ENCODE measurements at regions of chr22 and their contacts with region 1.

Region 1: DNA sequence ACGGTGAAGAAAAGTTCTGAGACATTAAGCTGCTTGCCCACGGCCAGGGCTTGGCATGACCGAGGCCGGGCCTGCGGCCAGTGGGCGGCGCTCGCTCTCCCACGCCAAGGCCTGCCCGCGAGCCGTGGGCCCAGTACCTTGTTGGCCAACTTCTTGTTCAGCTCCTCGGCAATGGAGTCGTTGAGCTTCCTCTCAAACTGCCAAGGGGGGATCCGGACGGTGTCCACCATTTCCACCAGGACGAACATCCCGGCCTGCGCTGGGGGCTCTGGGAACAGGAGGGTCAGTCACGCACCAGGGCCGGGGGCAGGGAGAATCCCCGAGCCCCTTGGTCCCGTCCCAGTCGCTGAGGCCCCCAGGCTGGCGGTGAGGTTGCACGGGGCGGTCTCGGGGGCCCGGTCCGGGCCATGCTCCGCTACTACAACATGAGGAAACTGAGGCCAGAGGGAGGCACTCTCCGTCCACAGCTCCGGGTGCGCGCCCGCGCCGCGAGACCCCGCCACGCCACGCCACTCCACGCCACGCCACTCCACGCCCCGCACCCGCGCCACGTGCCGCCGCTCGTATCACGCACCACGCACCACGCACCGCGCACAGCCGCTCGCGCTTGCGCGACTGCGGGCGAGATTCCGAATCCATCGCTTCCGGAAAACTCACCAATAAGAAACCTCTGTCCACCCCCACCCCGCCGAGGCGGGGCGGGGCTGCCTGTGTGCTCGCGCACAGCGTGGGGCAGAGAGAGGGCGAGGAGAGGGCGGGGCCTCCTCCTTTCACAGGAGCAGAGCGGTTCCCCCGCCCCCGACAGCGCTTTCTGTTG is at the start of gene POLR3H:
- DNase-seq: peak; percentile 91 to 99 (median 96)
- ATAC-seq: peak; percentile 98
- H3K4me3 ChIP-seq: peak within 1 kb of the TSS; percentile 90
- H3K4me3 Mint-ChIP-seq: peak within 1 kb of the TSS; percentile 98
- H3K27ac ChIP-seq: peak within 1 kb of the TSS; percentile 77 to 81
- H3K27ac Mint-ChIP-seq: peak within 1 kb of the TSS; percentile 85
- H3K4me1 ChIP-seq: peaks cover 26% of the 10 kb centered on the region
- H3K4me1 Mint-ChIP-seq: peaks cover 41% of the 10 kb centered on the region
- H3K27me3 ChIP-seq: no peaks in the 10 kb centered on the region
- H3K27me3 Mint-ChIP-seq: no peaks in the 10 kb centered on the region
- CTCF ChIP-seq: peak; percentile 51
- total RNA-seq, gene POLR3H: 13.4 to 17.3 TPM

Region 2: DNA sequence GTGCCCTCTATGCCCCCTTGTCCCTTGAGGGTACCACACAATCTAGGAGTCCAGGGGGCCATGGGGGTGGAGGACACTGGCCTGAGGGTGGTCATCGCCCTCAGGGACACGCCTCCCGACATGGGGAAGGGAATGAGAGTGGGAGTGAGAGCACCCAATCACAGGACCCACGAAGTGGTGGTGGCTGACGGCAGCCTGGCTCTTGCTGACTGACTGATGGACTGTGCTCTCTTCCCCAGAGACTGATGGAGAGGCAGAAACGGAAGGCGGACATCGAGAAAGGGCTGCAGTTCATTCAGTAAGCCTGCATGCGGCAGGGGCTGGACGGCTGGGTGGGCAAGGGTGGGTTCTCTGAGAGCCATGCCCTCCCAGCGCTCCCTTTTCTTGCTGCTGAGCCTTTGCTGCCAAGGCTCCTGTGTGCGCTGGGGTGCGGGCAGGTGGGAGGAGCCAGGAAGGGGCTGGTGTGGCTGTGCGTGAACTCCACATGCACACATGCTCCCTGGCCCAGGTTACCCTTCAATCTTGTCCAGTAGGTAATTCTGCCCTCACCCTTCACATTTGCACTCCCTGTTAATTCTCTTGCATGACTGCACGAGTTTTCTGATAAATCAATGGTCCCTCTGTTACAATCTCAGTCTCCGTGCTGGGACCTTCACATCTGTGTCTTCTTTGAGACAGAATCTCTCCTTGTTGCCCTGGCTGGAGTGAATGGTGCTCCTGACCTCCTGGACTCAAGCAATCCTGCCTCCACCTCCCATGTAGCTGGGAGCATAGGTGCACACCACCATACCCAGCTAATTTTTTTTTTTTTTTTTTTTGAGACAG is 223.4 kb before region 1 on chr22:
- CTCF ChIA-PET with region 1: no interaction called
- POLR2A ChIA-PET with region 1: no interaction called
- intact Hi-C with region 1: no loop called
- DNase-seq: no peak
- ATAC-seq: no peak
- H3K4me3 ChIP-seq: no peak overlapping the region
- H3K4me3 Mint-ChIP-seq: no peak overlapping the region
- H3K27ac ChIP-seq: no peak overlapping the region
- H3K27ac Mint-ChIP-seq: no peak overlapping the region
- H3K4me1 ChIP-seq: no peaks in the 10 kb centered on the region
- H3K4me1 Mint-ChIP-seq: no peaks in the 10 kb centered on the region
- H3K27me3 ChIP-seq: no peaks in the 10 kb centered on the region
- H3K27me3 Mint-ChIP-seq: no peaks in the 10 kb centered on the region
- CTCF ChIP-seq: no peak

Region 3: DNA sequence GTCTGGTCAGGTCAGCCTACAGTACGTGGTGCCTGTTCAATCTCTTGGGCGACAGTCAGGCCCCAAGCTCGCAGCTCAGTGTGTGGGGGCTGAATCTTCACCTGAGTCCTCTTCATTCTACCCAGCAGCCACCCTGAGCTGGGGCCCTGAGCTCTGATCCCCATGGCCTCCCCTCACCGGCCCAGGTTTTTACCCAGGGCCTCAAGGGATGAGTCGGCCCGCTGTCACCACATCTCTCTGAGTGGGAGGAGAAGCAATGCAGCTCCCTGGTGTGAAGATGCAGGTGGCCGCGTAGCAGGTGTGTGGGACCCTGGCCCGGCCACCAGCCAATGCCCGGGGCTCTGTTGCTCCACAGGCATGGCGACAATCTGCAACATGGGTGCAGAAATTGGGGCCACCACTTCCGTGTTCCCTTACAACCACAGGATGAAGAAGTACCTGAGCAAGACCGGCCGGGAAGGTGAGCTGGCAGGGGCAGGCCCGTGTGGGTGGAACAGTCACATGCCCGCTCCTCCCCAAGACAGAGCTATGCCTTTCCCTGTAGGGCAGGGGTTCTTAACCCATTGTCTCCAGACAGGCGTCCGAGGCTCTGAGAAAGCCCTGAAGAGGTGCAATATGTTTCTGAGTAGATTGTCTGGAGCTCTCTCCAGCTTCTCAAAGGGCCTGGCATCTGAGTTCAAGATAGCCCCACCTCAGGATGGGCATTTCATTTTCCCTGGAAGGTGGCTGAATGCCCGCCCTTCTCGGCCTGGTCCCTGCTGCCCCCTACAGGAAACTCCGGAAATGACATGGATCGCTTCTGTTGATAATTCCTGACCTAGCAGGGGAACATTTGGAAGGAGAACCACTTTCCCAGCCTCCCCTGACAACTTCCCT is 26.7 kb before region 1 on chr22:
- CTCF ChIA-PET with region 1: no interaction called
- POLR2A ChIA-PET with region 1: no interaction called
- intact Hi-C with region 1: no loop called
- DNase-seq: peak in 12 of 14 experiments; percentile 13 to 62 (median 30)
- ATAC-seq: no peak
- H3K4me3 ChIP-seq: no peak overlapping the region
- H3K4me3 Mint-ChIP-seq: no peak overlapping the region
- H3K27ac ChIP-seq: no peak overlapping the region
- H3K27ac Mint-ChIP-seq: no peak overlapping the region
- H3K4me1 ChIP-seq: no peaks in the 10 kb centered on the region
- H3K4me1 Mint-ChIP-seq: peaks cover under 1% of the 10 kb centered on the region
- H3K27me3 ChIP-seq: no peaks in the 10 kb centered on the region
- H3K27me3 Mint-ChIP-seq: no peaks in the 10 kb centered on the region
- CTCF ChIP-seq: peak; percentile 69

Region 4: GRCh38 chr22:41589391-41590241 is 45.6 kb after region 1 on chr22 and contains the start of gene PMM1:
- CTCF ChIA-PET with region 1: interaction called, 4 read pairs
- POLR2A ChIA-PET with region 1: interaction called, 13 read pairs
- intact Hi-C with region 1: loop called (anchors 1 to 2 kb)
- DNase-seq: peak; percentile 100
- ATAC-seq: peak; percentile 97
- H3K4me3 ChIP-seq: peak within 1 kb of the TSS; percentile 98
- H3K4me3 Mint-ChIP-seq: peak within 1 kb of the TSS; percentile 82
- H3K27ac ChIP-seq: peak within 1 kb of the TSS; percentile 29 to 64
- H3K27ac Mint-ChIP-seq: peak within 1 kb of the TSS; percentile 47
- H3K4me1 ChIP-seq: peaks cover 21% of the 10 kb centered on the region
- H3K4me1 Mint-ChIP-seq: peaks cover 17% of the 10 kb centered on the region
- H3K27me3 ChIP-seq: no peaks in the 10 kb centered on the region
- H3K27me3 Mint-ChIP-seq: no peaks in the 10 kb centered on the region
- CTCF ChIP-seq: no peak
- total RNA-seq, gene PMM1: 24.8 to 25.5 TPM

Region 5: DNA sequence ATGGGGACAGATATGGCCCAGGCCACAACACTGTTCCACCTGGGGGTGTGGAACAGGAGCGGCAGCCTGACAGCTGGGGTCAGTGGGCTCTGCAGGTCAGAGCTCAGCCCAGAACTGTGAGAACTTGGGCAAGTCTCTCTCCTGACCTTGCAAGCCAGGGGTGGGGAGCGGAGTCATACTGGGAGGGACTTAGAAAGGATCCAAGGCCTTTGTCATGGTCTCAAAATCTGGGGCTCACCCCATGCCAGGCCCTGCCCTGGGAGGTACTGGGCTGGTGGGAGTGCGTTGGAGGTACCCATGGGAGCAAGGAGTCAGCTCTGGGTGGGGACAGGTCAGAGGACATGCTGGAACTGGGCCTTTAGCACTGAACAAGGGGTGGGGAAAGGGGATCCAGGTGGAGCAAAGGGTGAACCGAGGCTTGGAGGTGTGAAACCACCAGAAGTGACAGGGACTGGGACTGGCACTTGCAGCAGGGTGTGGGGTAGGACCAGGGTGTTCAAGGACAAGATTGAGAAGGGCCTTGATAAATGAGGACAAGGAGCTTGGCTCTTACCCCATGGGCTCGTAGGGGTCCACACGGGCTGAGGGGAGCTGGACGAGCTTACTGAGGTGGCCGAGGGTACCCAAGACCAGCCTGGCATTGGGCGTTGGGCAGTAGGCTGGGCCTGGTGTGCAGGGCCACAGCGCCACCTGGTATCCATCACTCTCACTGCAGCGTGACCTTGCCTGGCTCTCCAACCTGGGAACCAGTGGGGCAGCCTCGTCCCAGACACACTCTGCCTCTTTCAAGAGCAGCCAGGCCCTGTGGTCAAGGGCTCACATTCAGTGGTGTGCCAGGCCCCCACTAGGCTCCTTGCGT is 52.9 kb after region 1 on chr22:
- CTCF ChIA-PET with region 1: no interaction called
- POLR2A ChIA-PET with region 1: no interaction called
- intact Hi-C with region 1: loop called in 1 of 2 experiments (anchors 2 kb)
- DNase-seq: peak in 11 of 14 experiments; percentile 11 to 63 (median 21)
- ATAC-seq: peak; percentile 71
- H3K4me3 ChIP-seq: no peak overlapping the region
- H3K4me3 Mint-ChIP-seq: no peak overlapping the region
- H3K27ac ChIP-seq: no peak overlapping the region
- H3K27ac Mint-ChIP-seq: no peak overlapping the region
- H3K4me1 ChIP-seq: no peaks in the 10 kb centered on the region
- H3K4me1 Mint-ChIP-seq: no peaks in the 10 kb centered on the region
- H3K27me3 ChIP-seq: no peaks in the 10 kb centered on the region
- H3K27me3 Mint-ChIP-seq: no peaks in the 10 kb centered on the region
- CTCF ChIP-seq: peak; percentile 50